ENCODE measurements at regions of chr1 and their contacts with region 1.

Region 1: GRCh38 chr1:86704458-86704971 is at the start of gene SH3GLB1:
- DNase-seq: peak; percentile 61
- ATAC-seq: peak; percentile 92
- H3K4me3 ChIP-seq: peak within 1 kb of the TSS; percentile 93
- H3K27ac ChIP-seq: peak within 1 kb of the TSS; percentile 94
- H3K4me1 ChIP-seq: no peaks in the 10 kb centered on the region
- H3K27me3 ChIP-seq: no peaks in the 10 kb centered on the region
- CTCF ChIP-seq: peak; percentile 83 to 90 (median 84)
- EP300 ChIP-seq: no peak; a peak in 1 of 4 replicates
- POLR2A ChIP-seq: peak; percentile 90
- RAD21 ChIP-seq: peak; percentile 49
- polyA plus RNA-seq, gene SH3GLB1: 19.8 to 20.2 TPM

Region 2: DNA sequence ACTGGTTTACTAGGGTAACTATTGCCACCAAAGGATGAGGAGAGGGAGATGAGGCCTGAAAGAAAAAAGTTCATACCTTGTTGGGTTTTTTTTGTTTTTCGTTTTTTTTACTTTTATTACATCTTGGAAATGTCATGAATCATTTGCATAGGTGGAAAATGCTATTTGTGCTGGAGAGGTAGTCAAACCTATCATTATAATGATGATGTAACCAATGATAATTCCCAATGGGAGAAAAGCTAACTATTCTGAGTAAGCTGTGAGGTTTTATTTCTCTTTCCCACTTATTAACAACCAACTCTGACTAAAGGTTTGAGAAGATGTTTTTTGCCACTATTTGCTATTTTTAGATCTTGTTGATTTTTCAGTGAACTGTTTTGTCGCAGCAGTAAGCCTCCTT is 28.8 kb after region 1 on chr1:
- CTCF ChIA-PET with region 1: interaction called, 22 read pairs
- POLR2A ChIA-PET with region 1: interaction called, 4 read pairs
- RAD21 ChIA-PET with region 1: interaction called, 7 read pairs
- SMC1A ChIA-PET with region 1: interaction called, 9 read pairs
- in situ Hi-C with region 1: no loop called
- intact Hi-C with region 1: no loop called
- DNase-seq: no peak
- ATAC-seq: no peak
- H3K4me3 ChIP-seq: no peak overlapping the region
- H3K27ac ChIP-seq: no peak overlapping the region
- H3K4me1 ChIP-seq: no peaks in the 10 kb centered on the region
- H3K27me3 ChIP-seq: no peaks in the 10 kb centered on the region
- CTCF ChIP-seq: no peak
- EP300 ChIP-seq: no peak
- POLR2A ChIP-seq: no peak
- RAD21 ChIP-seq: no peak

Region 3: DNA sequence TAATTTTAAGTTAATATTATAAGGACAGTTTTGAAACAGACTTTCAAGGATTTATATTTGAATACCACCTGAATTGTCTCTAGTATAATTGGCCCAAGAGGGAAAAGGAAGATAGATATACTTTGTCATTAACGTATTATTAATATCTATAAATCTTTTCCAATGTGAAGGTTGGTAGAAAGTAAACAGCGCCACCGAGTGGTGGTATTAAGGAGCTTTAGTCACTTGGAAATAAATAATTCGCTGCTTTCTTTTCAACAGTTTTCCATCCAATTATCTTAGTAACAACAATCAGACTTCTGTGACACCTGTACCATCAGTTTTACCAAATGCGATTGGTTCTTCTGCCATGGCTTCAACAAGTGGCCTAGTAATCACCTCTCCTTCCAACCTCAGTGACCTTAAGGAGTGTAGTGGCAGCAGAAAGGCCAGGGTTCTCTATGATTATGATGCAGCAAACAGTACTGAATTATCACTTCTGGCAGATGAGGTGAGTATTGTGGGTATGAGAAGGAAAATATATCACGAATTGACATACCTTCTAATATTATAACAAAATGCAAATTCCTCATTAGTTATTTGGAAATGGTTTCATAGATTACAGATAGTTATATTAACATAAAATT is 37.5 kb after region 1 on chr1:
- CTCF ChIA-PET with region 1: interaction called, 20 read pairs
- POLR2A ChIA-PET with region 1: no interaction called
- RAD21 ChIA-PET with region 1: interaction called, 5 read pairs
- SMC1A ChIA-PET with region 1: interaction called, 5 read pairs
- in situ Hi-C with region 1: no loop called
- intact Hi-C with region 1: no loop called
- DNase-seq: no peak
- ATAC-seq: peak; percentile 45; the same call in 1 of the 3 replicates
- H3K4me3 ChIP-seq: no peak overlapping the region
- H3K27ac ChIP-seq: no peak overlapping the region
- H3K4me1 ChIP-seq: no peaks in the 10 kb centered on the region
- H3K27me3 ChIP-seq: no peaks in the 10 kb centered on the region
- CTCF ChIP-seq: peak; percentile 39 to 51 (median 46); a peak in 5 of 6 replicates
- EP300 ChIP-seq: no peak
- POLR2A ChIP-seq: no peak
- RAD21 ChIP-seq: peak; percentile 55

Region 4: DNA sequence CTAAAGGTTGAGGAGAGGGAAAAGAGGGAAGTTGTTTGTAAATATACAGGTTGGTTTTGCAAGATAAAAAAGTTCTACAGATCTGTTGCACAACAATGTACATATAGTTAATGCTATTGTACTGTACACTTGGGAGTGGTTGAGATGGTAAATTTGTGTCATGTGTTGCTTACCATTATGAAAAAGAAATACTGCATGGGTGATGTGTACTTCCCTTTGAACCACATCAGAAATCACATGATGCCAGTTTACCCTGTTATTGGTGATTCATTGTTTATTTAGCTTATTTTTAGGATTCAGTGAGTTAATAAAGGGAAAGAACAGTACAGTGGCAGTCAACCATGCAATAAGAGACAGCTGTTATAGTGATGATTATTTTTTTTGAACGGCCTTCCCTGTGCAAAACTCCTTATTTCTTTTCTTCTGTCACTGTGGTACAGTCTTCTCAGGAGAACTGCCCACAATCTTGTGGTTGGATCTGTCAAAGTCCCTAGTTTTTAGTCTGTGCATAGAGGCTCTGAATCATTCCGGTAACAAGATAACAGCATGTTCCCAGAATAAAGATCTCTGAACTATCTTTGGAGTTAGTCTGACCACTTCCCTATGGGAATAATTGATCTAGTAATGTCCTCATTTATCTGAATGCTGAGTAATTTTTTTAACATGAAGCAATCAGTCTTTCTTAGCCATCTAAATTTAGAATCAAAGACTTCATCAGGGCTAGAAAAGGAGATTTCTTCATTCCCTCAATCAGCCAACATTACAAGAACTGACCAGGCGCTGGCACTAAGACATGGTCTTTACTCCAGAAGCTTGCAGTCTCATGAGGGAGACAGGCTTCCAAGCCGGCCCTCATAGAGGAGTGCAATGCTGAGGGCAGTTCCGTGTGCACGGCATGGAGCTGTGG is 84.0 kb after region 1 on chr1:
- CTCF ChIA-PET with region 1: no interaction called
- POLR2A ChIA-PET with region 1: no interaction called
- RAD21 ChIA-PET with region 1: no interaction called
- SMC1A ChIA-PET with region 1: no interaction called
- in situ Hi-C with region 1: no loop called
- intact Hi-C with region 1: no loop called
- DNase-seq: no peak
- ATAC-seq: no peak; the same call in 2 of the 3 replicates
- H3K4me3 ChIP-seq: no peak overlapping the region
- H3K27ac ChIP-seq: no peak overlapping the region
- H3K4me1 ChIP-seq: no peaks in the 10 kb centered on the region
- H3K27me3 ChIP-seq: no peaks in the 10 kb centered on the region
- CTCF ChIP-seq: no peak
- EP300 ChIP-seq: no peak
- POLR2A ChIP-seq: no peak
- RAD21 ChIP-seq: no peak

Region 5: DNA sequence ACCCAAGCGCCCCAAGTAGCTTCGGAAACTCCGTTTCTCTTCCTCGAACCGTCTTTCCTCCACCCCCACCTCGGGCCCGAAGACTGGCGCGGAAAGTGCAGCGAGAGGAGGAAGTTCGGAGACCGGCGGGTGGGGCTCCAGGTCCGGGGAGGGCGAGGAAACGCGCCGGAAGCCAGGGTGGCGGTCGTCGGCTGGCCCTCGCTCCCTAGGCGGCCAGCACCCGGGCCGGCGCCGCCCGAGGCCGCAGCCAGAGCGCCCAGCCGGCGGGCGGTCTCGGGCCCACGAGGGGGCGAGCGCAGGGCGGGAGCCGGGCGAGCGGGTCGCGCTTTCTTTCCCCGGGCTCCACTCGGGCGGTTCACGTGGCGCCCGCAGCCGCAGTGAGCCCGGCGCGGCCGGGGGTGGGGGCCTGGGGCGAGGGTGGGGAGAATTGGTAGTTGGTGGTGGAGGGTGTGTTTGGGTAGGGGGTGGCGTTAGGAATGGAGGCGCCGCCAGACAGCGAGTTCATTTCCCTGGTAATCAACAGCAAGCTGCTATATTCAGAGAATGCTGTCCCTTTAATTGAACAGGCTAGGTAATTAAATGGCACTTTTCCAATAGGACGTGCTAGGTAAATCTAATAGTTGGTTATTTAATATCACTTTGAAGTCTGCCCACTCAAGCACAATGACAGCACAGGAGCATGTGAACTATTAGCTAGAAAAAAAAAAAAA is 630.8 kb after region 1 on chr1:
- CTCF ChIA-PET with region 1: no interaction called
- POLR2A ChIA-PET with region 1: no interaction called
- RAD21 ChIA-PET with region 1: no interaction called
- SMC1A ChIA-PET with region 1: no interaction called
- in situ Hi-C with region 1: no loop called
- intact Hi-C with region 1: loop called (anchors 10 kb)
- DNase-seq: no peak
- ATAC-seq: peak; percentile 65
- H3K4me3 ChIP-seq: peak overlapping the region; percentile 75
- H3K27ac ChIP-seq: peak overlapping the region; percentile 53
- H3K4me1 ChIP-seq: peaks cover 14% of the 10 kb centered on the region
- H3K27me3 ChIP-seq: no peaks in the 10 kb centered on the region
- CTCF ChIP-seq: peak; percentile 9 to 44 (median 33); a peak in 5 of 6 replicates
- EP300 ChIP-seq: no peak
- POLR2A ChIP-seq: peak; percentile 79
- RAD21 ChIP-seq: no peak; the same call in 1 of the 2 replicates

Measured in GM12878 (cell line).